Head of caudate nucleus (tissue), 42 donors: ENCODE measurements at regions of chr20 and their contacts with region 1.

Region 1: GRCh38 chr20:32189691-32190615 is 17.6 kb downstream of the PLAGL2 start:
- DNase-seq: peak in 40 of 42 donors; percentile 39 to 79 (median 60)

Region 2: GRCh38 chr20:32109392-32110172 is 80.4 kb before region 1 on chr20 and contains the start of gene TM9SF4:
- intact Hi-C with region 1: loop called (anchors 10 kb)
- DNase-seq: peak; percentile 84 to 98 (median 93)

Region 3: GRCh38 chr20:32263398-32263954 is 73.5 kb after region 1 on chr20:
- intact Hi-C with region 1: no loop called
- DNase-seq: no peak

Region 4: DNA sequence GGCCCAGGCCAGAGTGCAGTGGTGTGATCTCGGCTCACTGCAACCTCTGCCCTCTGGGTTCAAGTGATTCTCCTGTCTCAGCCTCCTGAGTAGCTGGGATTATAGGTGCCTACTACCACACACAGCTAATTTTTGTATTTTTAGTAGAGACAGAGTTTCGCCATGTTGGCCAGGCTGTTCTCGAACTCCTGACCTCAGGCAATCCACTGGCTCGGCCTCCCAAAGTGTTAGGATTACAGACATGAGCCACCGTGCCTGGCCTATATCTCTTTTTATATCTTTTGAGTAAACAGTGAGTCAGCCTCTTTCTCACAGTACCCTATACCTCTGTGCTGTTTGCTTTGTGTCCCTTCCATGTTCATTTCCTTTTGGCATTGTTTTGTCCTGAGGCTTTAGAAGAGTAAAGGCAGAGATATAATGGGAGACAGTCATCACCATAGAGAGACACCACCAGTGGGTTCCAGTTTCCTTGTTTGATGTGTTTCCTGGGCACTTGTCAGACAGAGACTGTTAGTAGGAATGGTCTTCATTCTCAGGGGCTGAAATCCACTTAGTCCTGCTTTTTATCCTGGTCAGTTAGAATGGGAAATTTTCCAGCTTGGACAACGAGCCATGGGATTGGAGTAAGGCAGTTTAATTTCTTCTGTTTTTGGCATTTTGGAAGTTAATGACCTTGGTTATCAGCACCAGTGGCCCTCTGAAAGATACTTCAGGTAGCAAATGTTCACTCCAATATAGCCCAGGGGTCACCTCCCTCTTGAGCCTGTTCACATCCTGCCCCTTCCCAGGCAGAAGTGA is 136.0 kb after region 1 on chr20:
- intact Hi-C with region 1: no loop called
- DNase-seq: no peak